Activated CD4-positive, alpha-beta memory T cell treated with anti-CD3 and anti-CD28 coated beads for 36 hours (primary cell): ENCODE measurements at regions of chr1 and their contacts with region 1.

Region 1: DNA sequence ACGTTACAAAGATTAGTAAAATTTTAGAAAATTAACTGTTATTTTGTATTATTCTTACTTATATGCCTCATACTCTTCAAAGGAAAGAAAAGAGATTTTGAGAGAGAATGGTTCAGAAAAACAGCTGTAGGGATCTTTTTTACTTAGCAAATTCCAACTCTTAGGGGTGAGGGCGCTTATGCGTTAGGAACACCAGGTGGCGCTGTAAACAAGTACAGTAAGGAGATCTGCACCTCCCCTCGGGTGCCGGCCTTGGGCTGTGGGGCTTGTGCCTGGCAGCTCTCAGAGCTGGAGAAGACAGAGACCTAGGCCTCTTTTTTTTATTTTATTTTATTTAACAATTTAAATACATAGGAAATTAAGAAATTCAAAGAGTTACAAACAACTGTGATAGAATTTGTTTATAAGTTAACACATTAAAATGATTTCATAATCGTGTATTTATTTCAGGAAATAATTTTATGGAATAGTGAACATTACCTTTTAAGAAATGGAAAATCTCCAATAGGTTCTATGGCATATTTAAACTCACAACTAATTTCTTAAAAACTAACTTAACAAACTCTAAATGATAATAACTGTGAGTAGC is 32.6 kb downstream of the UTP25 start:
- DNase-seq: peak; percentile 78
- H3K4me3 Mint-ChIP-seq: no peak overlapping the region
- H3K27ac Mint-ChIP-seq: no peak overlapping the region
- H3K4me1 Mint-ChIP-seq: no peaks in the 10 kb centered on the region
- H3K27me3 Mint-ChIP-seq: peaks cover 10% of the 10 kb centered on the region

Region 2: DNA sequence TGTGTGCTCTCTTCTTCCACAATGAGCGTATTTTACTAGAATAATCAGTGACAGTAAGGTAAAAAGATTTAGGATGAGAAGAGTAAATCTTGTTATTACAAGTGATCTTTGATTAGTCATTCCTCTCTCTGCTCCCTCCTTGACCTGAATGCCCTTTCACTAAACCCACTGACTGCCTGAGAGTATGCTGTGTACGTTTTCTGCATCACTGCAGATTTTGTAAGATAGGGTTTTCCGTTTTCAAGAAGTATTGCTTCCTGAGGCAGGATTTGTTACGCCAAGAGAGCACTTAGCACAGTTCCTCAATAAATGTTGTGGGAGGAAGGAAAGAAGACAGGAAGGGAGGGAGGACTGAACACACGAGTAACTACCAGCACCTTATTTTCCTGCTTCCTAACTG is 200.5 kb before region 1 on chr1:
- CTCF ChIA-PET with region 1: no interaction called
- POLR2A ChIA-PET with region 1: no interaction called
- intact Hi-C with region 1: no loop called
- DNase-seq: no peak
- H3K4me3 Mint-ChIP-seq: no peak overlapping the region
- H3K27ac Mint-ChIP-seq: no peak overlapping the region
- H3K4me1 Mint-ChIP-seq: peaks cover 23% of the 10 kb centered on the region
- H3K27me3 Mint-ChIP-seq: no peaks in the 10 kb centered on the region

Region 3: GRCh38 chr1:209787551-209787950 is 72.8 kb before region 1 on chr1:
- CTCF ChIA-PET with region 1: no interaction called
- POLR2A ChIA-PET with region 1: no interaction called
- intact Hi-C with region 1: no loop called
- DNase-seq: no peak
- H3K4me3 Mint-ChIP-seq: no peak overlapping the region
- H3K27ac Mint-ChIP-seq: no peak overlapping the region
- H3K4me1 Mint-ChIP-seq: peaks cover 28% of the 10 kb centered on the region
- H3K27me3 Mint-ChIP-seq: peaks cover 3% of the 10 kb centered on the region

Region 4: GRCh38 chr1:209883341-209883971 is 23.1 kb after region 1 on chr1:
- CTCF ChIA-PET with region 1: interaction called, 14 read pairs
- POLR2A ChIA-PET with region 1: no interaction called
- intact Hi-C with region 1: no loop called
- DNase-seq: no peak
- H3K4me3 Mint-ChIP-seq: no peak overlapping the region
- H3K27ac Mint-ChIP-seq: no peak overlapping the region
- H3K4me1 Mint-ChIP-seq: peaks cover 6% of the 10 kb centered on the region
- H3K27me3 Mint-ChIP-seq: peaks cover 40% of the 10 kb centered on the region

Region 5: DNA sequence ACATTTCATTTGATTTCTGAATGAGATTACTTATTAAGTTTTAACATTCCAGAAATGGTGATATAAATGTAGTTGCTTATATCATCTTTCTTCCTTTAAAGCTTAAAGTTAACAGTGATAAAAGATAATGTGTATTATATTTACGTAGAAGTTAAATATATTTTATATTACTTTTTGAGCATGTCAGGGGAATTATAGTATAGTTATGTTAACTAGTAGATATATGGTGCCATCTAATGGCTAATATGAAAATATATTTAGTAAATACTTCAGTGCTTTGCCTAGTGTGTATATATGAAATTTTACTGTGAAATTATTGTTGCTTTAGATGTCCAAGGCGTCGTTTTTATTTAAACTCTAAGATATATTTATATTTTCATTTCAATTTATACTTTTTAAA is 129.1 kb after region 1 on chr1:
- CTCF ChIA-PET with region 1: interaction called, 43 read pairs
- POLR2A ChIA-PET with region 1: no interaction called
- intact Hi-C with region 1: loop called (anchors 1 kb)
- DNase-seq: no peak
- H3K4me3 Mint-ChIP-seq: no peak overlapping the region
- H3K27ac Mint-ChIP-seq: no peak overlapping the region
- H3K4me1 Mint-ChIP-seq: no peaks in the 10 kb centered on the region
- H3K27me3 Mint-ChIP-seq: peaks cover 22% of the 10 kb centered on the region

Region 6: DNA sequence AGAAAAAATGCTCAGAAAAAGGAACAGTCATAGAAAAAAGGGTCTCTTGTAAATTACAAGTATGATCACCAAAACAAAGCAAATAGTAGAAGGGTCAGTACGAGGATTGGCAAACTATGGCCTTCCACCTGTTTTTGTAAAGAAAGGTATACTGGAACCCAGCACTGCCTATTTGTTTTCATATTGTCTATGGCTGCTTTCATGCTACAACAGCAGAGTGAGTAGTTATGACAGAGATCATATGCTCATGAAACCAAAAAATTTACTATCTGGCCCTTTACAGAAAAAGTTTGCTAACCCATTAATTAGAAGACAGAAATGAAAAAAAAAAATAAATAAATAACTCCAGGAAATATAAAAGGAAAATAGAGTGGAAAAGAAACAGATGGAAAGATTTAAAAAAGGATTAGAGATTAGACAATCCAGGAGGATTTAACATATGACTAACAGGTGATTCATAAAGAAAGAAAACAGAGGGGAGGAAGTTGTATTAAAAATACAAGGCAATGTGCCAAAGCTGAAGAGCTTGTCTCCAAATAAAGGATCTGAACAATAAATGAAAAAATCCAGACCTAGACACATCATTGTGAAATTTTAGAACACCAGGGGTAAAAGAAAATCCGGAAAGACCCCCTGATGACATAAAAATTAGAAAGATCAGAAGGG is 263.7 kb after region 1 on chr1:
- CTCF ChIA-PET with region 1: no interaction called
- POLR2A ChIA-PET with region 1: no interaction called
- intact Hi-C with region 1: loop called (anchors 10 kb)
- DNase-seq: no peak
- H3K4me3 Mint-ChIP-seq: no peak overlapping the region
- H3K27ac Mint-ChIP-seq: no peak overlapping the region
- H3K4me1 Mint-ChIP-seq: no peaks in the 10 kb centered on the region
- H3K27me3 Mint-ChIP-seq: peaks cover 4% of the 10 kb centered on the region

Region 7: GRCh38 chr1:210311726-210312493 is 451.5 kb after region 1 on chr1:
- CTCF ChIA-PET with region 1: interaction called, 25 read pairs
- POLR2A ChIA-PET with region 1: no interaction called
- intact Hi-C with region 1: loop called (anchors 1 kb)
- DNase-seq: no peak
- H3K4me3 Mint-ChIP-seq: no peak overlapping the region
- H3K27ac Mint-ChIP-seq: no peak overlapping the region
- H3K4me1 Mint-ChIP-seq: peaks cover 6% of the 10 kb centered on the region
- H3K27me3 Mint-ChIP-seq: peaks cover 13% of the 10 kb centered on the region